Naive thymus-derived CD4-positive, alpha-beta T cell (primary cell): ENCODE measurements at regions of chr6 and their contacts with region 1.

Region 1: GRCh38 chr6:43629505-43630300 is 639 bp upstream of the GTPBP2 start:
- DNase-seq: peak; percentile 64 to 90 (median 75)
- ATAC-seq: peak; percentile 79
- H3K4me3 ChIP-seq: peak overlapping the region; percentile 98
- H3K4me3 Mint-ChIP-seq: peak overlapping the region; percentile 97 to 100 (median 99)
- H3K27ac ChIP-seq: peak overlapping the region; percentile 76
- H3K27ac Mint-ChIP-seq: peak overlapping the region; percentile 90 to 99 (median 98)
- H3K4me1 ChIP-seq: peaks cover 9 to 11% of the 10 kb centered on the region in 2 donors
- H3K4me1 Mint-ChIP-seq: peaks cover 30 to 42% (median 38%) of the 10 kb centered on the region in 7 donors
- H3K27me3 ChIP-seq: no peaks in the 10 kb centered on the region
- H3K27me3 Mint-ChIP-seq: no peaks in the 10 kb centered on the region

Region 2: DNA sequence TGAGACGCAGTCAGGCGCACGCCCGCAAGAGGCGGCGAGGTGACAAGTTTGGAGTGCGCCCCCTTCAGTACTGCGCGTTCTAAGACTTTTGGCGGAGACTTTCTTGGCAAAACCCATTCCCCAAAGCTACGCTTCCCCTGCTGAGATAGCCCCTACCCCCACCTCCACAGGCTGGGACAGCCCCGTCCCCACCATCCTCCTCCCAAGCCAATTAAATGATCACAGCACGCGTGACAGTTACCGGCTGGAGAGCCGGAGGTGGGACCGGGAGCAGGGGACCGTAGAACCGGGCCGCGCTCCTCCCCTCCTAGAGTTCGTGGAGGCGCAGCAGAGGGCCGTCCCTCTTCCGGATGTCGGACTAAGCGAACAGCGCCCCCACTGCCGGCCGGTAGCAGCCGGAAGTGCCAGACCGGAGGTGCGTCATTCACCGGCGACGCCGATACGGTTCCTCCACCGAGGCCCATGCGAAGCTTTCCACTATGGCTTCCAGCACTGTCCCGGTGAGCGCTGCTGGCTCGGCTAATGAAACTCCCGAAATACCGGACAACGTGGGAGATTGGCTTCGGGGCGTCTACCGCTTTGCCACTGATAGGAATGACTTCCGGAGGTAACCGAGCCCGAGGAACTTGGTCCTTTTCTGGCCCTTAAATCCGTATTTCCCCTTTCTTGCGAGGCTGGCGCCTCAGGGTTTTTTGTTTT is 1842.3 kb before region 1 on chr6 and contains the start of gene TOMM6:
- CTCF ChIA-PET with region 1: no interaction called
- POLR2A ChIA-PET with region 1: no interaction called
- intact Hi-C with region 1: loop called in 1 of 2 experiments (anchors 2 kb)
- DNase-seq: peak; percentile 87 to 96 (median 94)
- ATAC-seq: peak; percentile 88
- H3K4me3 ChIP-seq: peak within 1 kb of the TSS; percentile 97
- H3K4me3 Mint-ChIP-seq: peak within 1 kb of the TSS; percentile 91 to 99 (median 97)
- H3K27ac ChIP-seq: peak within 1 kb of the TSS; percentile 89
- H3K27ac Mint-ChIP-seq: peak within 1 kb of the TSS; percentile 95 to 99 (median 98)
- H3K4me1 ChIP-seq: peaks cover 6 to 9% of the 10 kb centered on the region in 2 donors
- H3K4me1 Mint-ChIP-seq: peaks cover 8 to 29% (median 17%) of the 10 kb centered on the region in 7 donors
- H3K27me3 ChIP-seq: no peaks in the 10 kb centered on the region
- H3K27me3 Mint-ChIP-seq: peaks cover 0 to 14% (median 0%) of the 10 kb centered on the region in 5 donors
- total RNA-seq, gene TOMM6: 114 to 193 (median 128) TPM

Region 3: GRCh38 chr6:43059168-43060033 is 570.3 kb before region 1 on chr6 and contains the starts of genes KLC4 and MRPL2:
- CTCF ChIA-PET with region 1: no interaction called
- POLR2A ChIA-PET with region 1: no interaction called
- intact Hi-C with region 1: loop called in 1 of 2 experiments (anchors 1 kb)
- DNase-seq: peak; percentile 79 to 98 (median 95)
- ATAC-seq: peak; percentile 99
- H3K4me3 ChIP-seq: peak within 1 kb of the TSS; percentile 80
- H3K4me3 Mint-ChIP-seq: peak within 1 kb of the TSS; percentile 88 to 100 (median 96)
- H3K27ac ChIP-seq: peak within 1 kb of the TSS; percentile 88
- H3K27ac Mint-ChIP-seq: peak within 1 kb of the TSS; percentile 95 to 100 (median 99)
- H3K4me1 ChIP-seq: peaks cover 0 to 21% of the 10 kb centered on the region in 2 donors
- H3K4me1 Mint-ChIP-seq: peaks cover 28 to 50% (median 45%) of the 10 kb centered on the region in 7 donors
- H3K27me3 ChIP-seq: no peaks in the 10 kb centered on the region
- H3K27me3 Mint-ChIP-seq: no peaks in the 10 kb centered on the region
- total RNA-seq, gene KLC4: 16.5 to 56.9 (median 42.5) TPM
- total RNA-seq, gene MRPL2: 32.0 to 57.5 (median 47.7) TPM

Region 4: GRCh38 chr6:43477235-43478007 is 152.3 kb before region 1 on chr6 and contains the start of gene TJAP1:
- CTCF ChIA-PET with region 1: no interaction called
- POLR2A ChIA-PET with region 1: no interaction called
- intact Hi-C with region 1: loop called in 1 of 2 experiments (anchors 1 kb)
- DNase-seq: peak; percentile 89 to 99 (median 95)
- ATAC-seq: peak; percentile 100
- H3K4me3 ChIP-seq: peak within 1 kb of the TSS; percentile 83
- H3K4me3 Mint-ChIP-seq: peak within 1 kb of the TSS; percentile 87 to 99 (median 93)
- H3K27ac ChIP-seq: peak within 1 kb of the TSS; percentile 96
- H3K27ac Mint-ChIP-seq: peak within 1 kb of the TSS; percentile 90 to 98 (median 96)
- H3K4me1 ChIP-seq: peaks cover 10 to 16% of the 10 kb centered on the region in 2 donors
- H3K4me1 Mint-ChIP-seq: peaks cover 37 to 54% (median 51%) of the 10 kb centered on the region in 7 donors
- H3K27me3 ChIP-seq: no peaks in the 10 kb centered on the region
- H3K27me3 Mint-ChIP-seq: no peaks in the 10 kb centered on the region
- total RNA-seq, gene TJAP1: 29.2 to 55.2 (median 33.5) TPM

Region 5: DNA sequence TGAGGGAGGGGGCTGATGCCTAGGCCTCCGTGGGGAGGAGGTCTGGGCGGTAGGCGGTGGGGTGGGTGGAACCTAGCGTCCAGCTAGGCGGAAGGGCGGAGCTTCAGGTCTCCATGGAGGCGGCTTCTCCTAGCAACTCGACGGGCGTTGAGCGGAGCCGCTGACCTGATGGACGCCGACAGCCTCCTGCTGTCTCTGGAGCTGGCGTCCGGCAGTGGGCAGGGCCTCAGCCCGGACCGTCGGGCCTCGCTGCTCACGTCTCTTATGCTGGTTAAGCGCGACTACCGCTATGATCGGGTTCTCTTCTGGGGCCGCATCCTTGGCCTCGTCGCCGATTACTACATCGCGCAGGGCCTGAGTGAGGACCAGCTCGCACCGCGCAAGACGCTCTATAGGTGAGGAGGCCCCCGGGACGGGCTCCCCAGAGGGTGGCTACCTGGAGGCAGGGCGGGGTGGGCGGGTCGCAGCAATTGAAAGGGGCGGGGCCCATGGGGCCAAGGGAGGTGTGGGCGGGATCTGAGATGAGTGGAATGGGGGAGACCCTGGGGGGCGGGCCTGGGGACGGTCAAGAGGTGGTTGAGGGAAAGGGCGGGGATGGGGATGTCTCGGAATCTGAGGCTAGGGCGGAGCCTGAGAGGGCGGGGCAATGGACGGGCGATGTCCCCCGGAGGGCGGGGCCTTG is 15.4 kb after region 1 on chr6 and contains the start of gene RSPH9:
- CTCF ChIA-PET with region 1: no interaction called
- POLR2A ChIA-PET with region 1: interaction called, 5 read pairs
- intact Hi-C with region 1: loop called (anchors 1 kb)
- DNase-seq: peak in 8 of 9 donors; percentile 35 to 70 (median 45)
- ATAC-seq: peak; percentile 86
- H3K4me3 ChIP-seq: peak within 1 kb of the TSS; percentile 52
- H3K4me3 Mint-ChIP-seq: peak within 1 kb of the TSS; percentile 75 to 92 (median 86)
- H3K27ac ChIP-seq: peak within 1 kb of the TSS; percentile 41
- H3K27ac Mint-ChIP-seq: peak within 1 kb of the TSS; percentile 26 to 79 (median 66)
- H3K4me1 ChIP-seq: no peaks in the 10 kb centered on the region
- H3K4me1 Mint-ChIP-seq: peaks cover 12 to 34% (median 22%) of the 10 kb centered on the region in 7 donors
- H3K27me3 ChIP-seq: no peaks in the 10 kb centered on the region
- H3K27me3 Mint-ChIP-seq: no peaks in the 10 kb centered on the region
- total RNA-seq, gene RSPH9: not detected

Region 6: DNA sequence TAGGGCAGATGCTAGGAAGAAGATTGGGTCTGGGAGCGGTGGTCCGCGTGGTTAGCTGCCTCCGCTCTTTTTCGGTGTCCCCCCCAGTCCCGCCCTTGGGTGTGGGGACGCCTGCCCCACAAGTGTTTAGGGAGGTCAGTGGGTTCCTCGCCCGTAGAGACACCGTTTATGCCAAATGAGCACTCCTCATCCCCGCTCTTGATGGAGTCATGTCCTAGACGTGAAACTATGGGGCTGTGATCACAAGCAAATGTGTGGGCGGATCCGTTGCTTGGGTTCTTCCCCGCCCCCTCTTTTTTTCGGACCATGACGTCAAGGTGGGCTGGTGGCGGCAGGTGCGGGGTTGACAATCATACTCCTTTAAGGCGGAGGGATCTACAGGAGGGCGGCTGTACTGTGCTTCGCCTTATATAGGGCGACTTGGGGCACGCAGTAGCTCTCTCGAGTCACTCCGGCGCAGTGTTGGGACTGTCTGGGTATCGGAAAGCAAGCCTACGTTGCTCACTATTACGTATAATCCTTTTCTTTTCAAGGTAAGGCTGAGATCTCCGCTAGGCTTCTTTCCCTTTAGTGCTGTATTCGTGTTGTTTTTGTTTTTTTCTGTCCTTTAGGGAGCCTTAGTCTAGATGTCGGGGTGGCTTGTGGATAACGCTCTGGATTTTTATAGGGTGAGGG is 617.1 kb after region 1 on chr6 and contains the start of gene HSP90AB1:
- CTCF ChIA-PET with region 1: no interaction called
- POLR2A ChIA-PET with region 1: interaction called, 5 read pairs
- intact Hi-C with region 1: loop called (anchors 2 kb)
- DNase-seq: peak; percentile 78 to 98 (median 97)
- ATAC-seq: peak; percentile 90
- H3K4me3 ChIP-seq: peak within 1 kb of the TSS; percentile 99
- H3K4me3 Mint-ChIP-seq: peak within 1 kb of the TSS; percentile 94 to 99 (median 98)
- H3K27ac ChIP-seq: peak within 1 kb of the TSS; percentile 93
- H3K27ac Mint-ChIP-seq: peak within 1 kb of the TSS; percentile 96 to 100 (median 98)
- H3K4me1 ChIP-seq: peaks cover 15 to 19% of the 10 kb centered on the region in 2 donors
- H3K4me1 Mint-ChIP-seq: peaks cover 29 to 53% (median 44%) of the 10 kb centered on the region in 7 donors
- H3K27me3 ChIP-seq: no peaks in the 10 kb centered on the region
- H3K27me3 Mint-ChIP-seq: peaks cover 0 to 12% (median 0%) of the 10 kb centered on the region in 5 donors
- total RNA-seq, gene HSP90AB1: 345 to 750 (median 366) TPM